ENCODE measurements at regions of chr6 and their contacts with region 1.

Region 1: GRCh38 chr6:35731736-35732532 is 4.9 kb upstream of the ARMC12 start:
- DNase-seq: peak; percentile 99
- ATAC-seq: peak; percentile 57
- H3K4me3 Mint-ChIP-seq: peak overlapping the region; percentile 77
- H3K27ac Mint-ChIP-seq: peak overlapping the region; percentile 95
- H3K4me1 Mint-ChIP-seq: peaks cover 84% of the 10 kb centered on the region
- H3K27me3 Mint-ChIP-seq: no peaks in the 10 kb centered on the region

Region 2: GRCh38 chr6:35452186-35453090 is 279.5 kb before region 1 on chr6 and contains the start of gene FANCE:
- CTCF ChIA-PET with region 1: interaction called, 3 read pairs
- POLR2A ChIA-PET with region 1: no interaction called
- intact Hi-C with region 1: loop called in 1 of 2 experiments (anchors 5 kb)
- DNase-seq: peak; percentile 95
- ATAC-seq: peak; percentile 89
- H3K4me3 Mint-ChIP-seq: peak within 1 kb of the TSS; percentile 82
- H3K27ac Mint-ChIP-seq: peak within 1 kb of the TSS; percentile 47
- H3K4me1 Mint-ChIP-seq: peaks cover 30% of the 10 kb centered on the region
- H3K27me3 Mint-ChIP-seq: no peaks in the 10 kb centered on the region
- total RNA-seq, gene FANCE: 14.3 to 14.8 TPM

Region 3: GRCh38 chr6:35569011-35569461 is 162.9 kb before region 1 on chr6:
- CTCF ChIA-PET with region 1: interaction called, 20 read pairs
- POLR2A ChIA-PET with region 1: no interaction called
- intact Hi-C with region 1: loop called in 1 of 2 experiments (anchors 1 kb)
- DNase-seq: peak; percentile 73
- ATAC-seq: peak; percentile 80
- H3K4me3 Mint-ChIP-seq: no peak overlapping the region
- H3K27ac Mint-ChIP-seq: no peak overlapping the region
- H3K4me1 Mint-ChIP-seq: peaks cover 5% of the 10 kb centered on the region
- H3K27me3 Mint-ChIP-seq: no peaks in the 10 kb centered on the region

Region 4: DNA sequence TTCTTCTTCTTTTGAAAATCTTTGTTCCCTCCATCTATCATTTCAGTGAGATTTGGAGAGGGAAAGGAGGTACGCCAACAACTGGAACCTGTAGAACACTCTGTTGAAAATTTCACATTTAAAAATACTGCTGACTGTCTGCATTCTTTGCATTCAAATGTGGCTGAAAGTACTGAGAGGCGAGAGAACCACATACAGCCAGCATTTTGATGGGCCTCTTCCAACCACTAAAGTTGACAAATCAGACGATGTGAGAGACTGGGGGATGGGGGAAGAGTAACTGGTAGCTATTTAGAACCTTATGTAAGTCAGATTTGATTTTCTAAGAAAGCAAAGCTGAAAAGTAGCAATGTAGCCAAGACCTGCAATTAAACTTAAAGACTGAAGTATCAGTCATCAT is 120.7 kb before region 1 on chr6:
- CTCF ChIA-PET with region 1: interaction called, 14 read pairs
- POLR2A ChIA-PET with region 1: interaction called, 3 read pairs
- intact Hi-C with region 1: no loop called
- DNase-seq: peak; percentile 48
- ATAC-seq: peak; percentile 84
- H3K4me3 Mint-ChIP-seq: no peak overlapping the region
- H3K27ac Mint-ChIP-seq: peak overlapping the region; percentile 84
- H3K4me1 Mint-ChIP-seq: peaks cover 66% of the 10 kb centered on the region
- H3K27me3 Mint-ChIP-seq: no peaks in the 10 kb centered on the region

Region 5: DNA sequence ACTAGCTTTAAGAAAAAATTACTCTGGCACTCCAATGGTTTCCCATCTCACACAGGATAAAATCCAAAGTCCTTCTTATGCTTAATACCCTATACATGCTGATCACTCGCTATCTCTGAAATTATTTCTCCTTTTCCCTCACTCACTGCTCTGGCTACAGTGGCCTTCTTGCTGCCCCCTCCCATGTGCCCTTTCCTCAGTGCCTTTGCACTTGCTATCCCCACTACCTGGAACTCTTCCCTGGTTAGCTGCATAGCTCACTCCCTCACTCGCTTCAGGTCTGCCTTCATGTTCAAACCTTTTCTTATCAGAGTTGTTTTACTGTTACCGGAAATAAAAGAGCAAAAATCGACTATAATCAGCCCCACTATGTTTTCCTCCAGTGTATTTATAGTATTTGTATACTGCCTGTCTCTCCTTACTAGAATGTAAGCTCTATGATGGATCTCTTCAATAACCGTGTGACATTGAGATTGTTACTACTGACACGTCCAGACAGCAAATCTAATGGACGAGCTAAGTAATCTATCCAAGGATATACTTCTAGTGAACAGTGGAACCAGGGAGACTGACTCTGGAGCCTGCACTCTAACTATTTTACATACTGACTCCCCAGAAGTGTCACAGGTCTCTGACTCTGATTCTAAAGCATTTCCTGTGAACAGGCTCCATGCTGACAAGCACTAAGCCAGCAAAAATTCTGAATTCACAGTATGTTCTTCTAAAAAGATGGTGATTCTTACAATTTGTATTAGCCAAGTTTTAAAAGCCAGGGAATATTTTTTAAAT is 68.3 kb before region 1 on chr6:
- CTCF ChIA-PET with region 1: interaction called, 47 read pairs
- POLR2A ChIA-PET with region 1: interaction called, 4 read pairs
- intact Hi-C with region 1: loop called in 1 of 2 experiments (anchors 5 kb)
- DNase-seq: no peak
- ATAC-seq: peak; percentile 71
- H3K4me3 Mint-ChIP-seq: no peak overlapping the region
- H3K27ac Mint-ChIP-seq: no peak overlapping the region
- H3K4me1 Mint-ChIP-seq: peaks cover 27% of the 10 kb centered on the region
- H3K27me3 Mint-ChIP-seq: no peaks in the 10 kb centered on the region

Region 6: GRCh38 chr6:35710241-35710847 is 21.6 kb before region 1 on chr6:
- CTCF ChIA-PET with region 1: interaction called, 15 read pairs
- POLR2A ChIA-PET with region 1: interaction called, 14 read pairs
- intact Hi-C with region 1: loop called in 1 of 2 experiments (anchors 2 kb)
- DNase-seq: peak; percentile 75
- ATAC-seq: peak; percentile 96
- H3K4me3 Mint-ChIP-seq: peak overlapping the region; percentile 34
- H3K27ac Mint-ChIP-seq: peak overlapping the region; percentile 84
- H3K4me1 Mint-ChIP-seq: peaks cover 29% of the 10 kb centered on the region
- H3K27me3 Mint-ChIP-seq: no peaks in the 10 kb centered on the region

Region 7: GRCh38 chr6:35810971-35811497 is 79.1 kb after region 1 on chr6:
- CTCF ChIA-PET with region 1: no interaction called
- POLR2A ChIA-PET with region 1: no interaction called
- intact Hi-C with region 1: no loop called
- DNase-seq: no peak
- ATAC-seq: peak; percentile 39
- H3K4me3 Mint-ChIP-seq: no peak overlapping the region
- H3K27ac Mint-ChIP-seq: no peak overlapping the region
- H3K4me1 Mint-ChIP-seq: no peaks in the 10 kb centered on the region
- H3K27me3 Mint-ChIP-seq: peaks cover 10% of the 10 kb centered on the region

Region 8: GRCh38 chr6:36442671-36443470 is 710.9 kb after region 1 on chr6 and contains the starts of genes KCTD20 and PXT1:
- CTCF ChIA-PET with region 1: no interaction called
- POLR2A ChIA-PET with region 1: no interaction called
- intact Hi-C with region 1: loop called in 1 of 2 experiments (anchors 5 kb)
- DNase-seq: peak; percentile 94
- ATAC-seq: peak; percentile 78
- H3K4me3 Mint-ChIP-seq: peak within 1 kb of the TSS; percentile 95
- H3K27ac Mint-ChIP-seq: peak within 1 kb of the TSS; percentile 97
- H3K4me1 Mint-ChIP-seq: peaks cover 27% of the 10 kb centered on the region
- H3K27me3 Mint-ChIP-seq: no peaks in the 10 kb centered on the region
- total RNA-seq, gene KCTD20: 46.5 to 50.6 TPM
- total RNA-seq, gene PXT1: 0.11 to 0.14 TPM